ENCODE measurements at regions of chr22 and their contacts with region 1.

Region 1: DNA sequence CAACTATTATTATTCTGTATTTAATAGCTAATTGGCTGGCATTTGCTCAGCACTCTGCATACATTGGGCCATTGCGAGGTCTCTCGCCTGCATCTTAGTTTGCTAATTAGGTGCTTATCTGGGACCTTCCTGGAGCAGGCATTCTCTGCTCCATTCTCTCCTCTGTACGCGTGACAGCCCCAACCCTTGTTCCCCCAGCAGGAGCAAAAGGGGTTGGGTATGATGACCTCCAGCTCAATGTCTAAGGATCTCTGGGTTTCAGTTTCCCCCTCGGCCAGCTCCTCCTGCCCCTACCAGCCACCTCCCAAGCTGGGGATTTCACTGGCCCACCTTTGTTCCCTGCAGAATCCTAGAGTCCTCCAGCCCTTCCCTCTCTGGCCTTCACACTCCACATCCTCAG is 9.7 kb upstream of the LGALS2 start:
- DNase-seq: no peak
- H3K4me3 ChIP-seq: peak overlapping the region in 1 of 3 experiments; percentile 23
- H3K4me3 Mint-ChIP-seq: no peak overlapping the region
- H3K27ac ChIP-seq: peak overlapping the region; percentile 93 to 98
- H3K27ac Mint-ChIP-seq: peak overlapping the region; percentile 93 to 100 (median 99)
- H3K4me1 ChIP-seq: peaks cover 34 to 42% of the 10 kb centered on the region in 2 donors
- H3K4me1 Mint-ChIP-seq: peaks cover 39% of the 10 kb centered on the region
- H3K27me3 ChIP-seq: no peaks in the 10 kb centered on the region
- H3K27me3 Mint-ChIP-seq: peaks cover 3 to 6% (median 3%) of the 10 kb centered on the region in 3 donors
- CTCF ChIP-seq: no peak

Region 2: GRCh38 chr22:37538590-37539357 is 50.9 kb before region 1 on chr22:
- intact Hi-C with region 1: loop called (anchors 2 kb)
- DNase-seq: peak; percentile 89 to 91 (median 90)
- H3K4me3 ChIP-seq: peak overlapping the region in 1 of 3 experiments; percentile 26
- H3K4me3 Mint-ChIP-seq: peak overlapping the region; percentile 6 to 78
- H3K27ac ChIP-seq: peak overlapping the region in 1 of 2 donors; percentile 14
- H3K27ac Mint-ChIP-seq: peak overlapping the region; percentile 62 to 86 (median 80)
- H3K4me1 ChIP-seq: peaks cover 32 to 49% of the 10 kb centered on the region in 2 donors
- H3K4me1 Mint-ChIP-seq: peaks cover 45% of the 10 kb centered on the region
- H3K27me3 ChIP-seq: no peaks in the 10 kb centered on the region
- H3K27me3 Mint-ChIP-seq: peaks cover 4 to 5% (median 4%) of the 10 kb centered on the region in 3 donors
- CTCF ChIP-seq: peak; percentile 96

Region 3: GRCh38 chr22:37566903-37567820 is 22.5 kb before region 1 on chr22:
- intact Hi-C with region 1: loop called in 1 of 2 experiments (anchors 2 kb)
- DNase-seq: peak; percentile 68 to 80 (median 77)
- H3K4me3 ChIP-seq: peak overlapping the region in 1 of 3 experiments; percentile 37
- H3K4me3 Mint-ChIP-seq: peak overlapping the region in 1 of 2 donors; percentile 64
- H3K27ac ChIP-seq: peak overlapping the region in 1 of 2 donors; percentile 25
- H3K27ac Mint-ChIP-seq: peak overlapping the region in 6 of 7 donors; percentile 33 to 79 (median 62)
- H3K4me1 ChIP-seq: peaks cover 44 to 83% of the 10 kb centered on the region in 2 donors
- H3K4me1 Mint-ChIP-seq: peaks cover 60% of the 10 kb centered on the region
- H3K27me3 ChIP-seq: peaks cover 0 to 6% of the 10 kb centered on the region in 2 donors
- H3K27me3 Mint-ChIP-seq: peaks cover 17 to 29% (median 26%) of the 10 kb centered on the region in 3 donors
- CTCF ChIP-seq: peak; percentile 98

Region 4: GRCh38 chr22:37575490-37576003 is 14.1 kb before region 1 on chr22:
- intact Hi-C with region 1: loop called (anchors 2 kb)
- DNase-seq: no peak
- H3K4me3 ChIP-seq: peak overlapping the region in 1 of 3 experiments; percentile 91
- H3K4me3 Mint-ChIP-seq: no peak overlapping the region
- H3K27ac ChIP-seq: peak overlapping the region; percentile 93 to 96
- H3K27ac Mint-ChIP-seq: peak overlapping the region; percentile 95 to 99 (median 98)
- H3K4me1 ChIP-seq: peaks cover 69 to 92% of the 10 kb centered on the region in 2 donors
- H3K4me1 Mint-ChIP-seq: peaks cover 79% of the 10 kb centered on the region
- H3K27me3 ChIP-seq: no peaks in the 10 kb centered on the region
- H3K27me3 Mint-ChIP-seq: peaks cover 0 to 3% (median 1%) of the 10 kb centered on the region in 3 donors
- CTCF ChIP-seq: no peak

Region 5: GRCh38 chr22:37676736-37677492 is 87.3 kb after region 1 on chr22:
- intact Hi-C with region 1: no loop called
- DNase-seq: peak; percentile 92 to 95 (median 94)
- H3K4me3 ChIP-seq: peak overlapping the region; percentile 62 to 98 (median 76)
- H3K4me3 Mint-ChIP-seq: peak overlapping the region; percentile 78 to 96
- H3K27ac ChIP-seq: peak overlapping the region; percentile 80 to 91
- H3K27ac Mint-ChIP-seq: peak overlapping the region; percentile 91 to 99 (median 95)
- H3K4me1 ChIP-seq: peaks cover 68 to 77% of the 10 kb centered on the region in 2 donors
- H3K4me1 Mint-ChIP-seq: peaks cover 53% of the 10 kb centered on the region
- H3K27me3 ChIP-seq: no peaks in the 10 kb centered on the region
- H3K27me3 Mint-ChIP-seq: peaks cover 0 to 2% (median 0%) of the 10 kb centered on the region in 3 donors
- CTCF ChIP-seq: no peak

Region 6: DNA sequence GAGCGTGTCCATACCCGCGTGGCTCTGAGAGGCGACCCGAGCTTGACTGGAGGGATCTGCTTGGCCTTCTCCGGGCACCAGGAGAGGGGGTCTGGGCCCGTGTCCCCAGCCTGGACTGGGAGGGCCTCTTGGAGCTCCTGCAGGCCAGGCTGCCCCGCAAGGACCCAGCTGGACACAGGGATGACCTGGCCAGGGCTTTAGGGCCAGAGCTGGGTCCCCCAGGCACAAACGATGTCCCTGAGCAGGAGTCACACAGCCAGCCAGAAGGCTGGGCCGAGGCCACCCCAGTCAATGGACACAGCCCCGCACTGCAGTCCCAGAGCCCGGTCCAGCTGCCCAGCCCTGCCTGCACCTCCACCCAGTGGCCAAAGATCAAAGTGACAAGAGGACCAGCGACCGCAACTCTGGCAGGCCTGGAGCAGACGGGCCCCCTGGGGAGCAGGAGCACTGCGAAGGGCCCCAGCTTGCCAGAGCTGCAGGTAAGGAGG is 145.4 kb after region 1 on chr22:
- intact Hi-C with region 1: no loop called
- DNase-seq: peak in 1 of 3 donors; percentile 34
- H3K4me3 ChIP-seq: no peak overlapping the region
- H3K4me3 Mint-ChIP-seq: no peak overlapping the region
- H3K27ac ChIP-seq: no peak overlapping the region
- H3K27ac Mint-ChIP-seq: no peak overlapping the region
- H3K4me1 ChIP-seq: peaks cover 69 to 85% of the 10 kb centered on the region in 2 donors
- H3K4me1 Mint-ChIP-seq: peaks cover 71% of the 10 kb centered on the region
- H3K27me3 ChIP-seq: no peaks in the 10 kb centered on the region
- H3K27me3 Mint-ChIP-seq: peaks cover 0 to 4% (median 2%) of the 10 kb centered on the region in 3 donors
- CTCF ChIP-seq: peak; percentile 40